Activated T-helper 1 cell treated with anti-CD3 and anti-CD28 coated beads, Interleukin-12 subunit alpha, Interleukin-12 subunit beta, Interleukin-2, Interleukin-4 antibody, amounts not matched to agents 30 ng/mL and 10 ng/mL and 1 ng/mL, durations not matched to agents 14 hours and 24 hours and 36 hours (primary cell): ENCODE measurements at regions of chr6 and their contacts with region 1.

Region 1: GRCh38 chr6:42563697-42564505 is at the start of gene UBR2:
- DNase-seq: peak; percentile 91
- H3K4me3 Mint-ChIP-seq: peak within 1 kb of the TSS; percentile 100
- H3K27ac Mint-ChIP-seq: peak within 1 kb of the TSS; percentile 97
- H3K4me1 Mint-ChIP-seq: peaks cover 31% of the 10 kb centered on the region
- H3K27me3 Mint-ChIP-seq: peaks cover 2% of the 10 kb centered on the region
- total RNA-seq, gene UBR2: 26.8 and 28.1 TPM in 2 replicates

Region 2: DNA sequence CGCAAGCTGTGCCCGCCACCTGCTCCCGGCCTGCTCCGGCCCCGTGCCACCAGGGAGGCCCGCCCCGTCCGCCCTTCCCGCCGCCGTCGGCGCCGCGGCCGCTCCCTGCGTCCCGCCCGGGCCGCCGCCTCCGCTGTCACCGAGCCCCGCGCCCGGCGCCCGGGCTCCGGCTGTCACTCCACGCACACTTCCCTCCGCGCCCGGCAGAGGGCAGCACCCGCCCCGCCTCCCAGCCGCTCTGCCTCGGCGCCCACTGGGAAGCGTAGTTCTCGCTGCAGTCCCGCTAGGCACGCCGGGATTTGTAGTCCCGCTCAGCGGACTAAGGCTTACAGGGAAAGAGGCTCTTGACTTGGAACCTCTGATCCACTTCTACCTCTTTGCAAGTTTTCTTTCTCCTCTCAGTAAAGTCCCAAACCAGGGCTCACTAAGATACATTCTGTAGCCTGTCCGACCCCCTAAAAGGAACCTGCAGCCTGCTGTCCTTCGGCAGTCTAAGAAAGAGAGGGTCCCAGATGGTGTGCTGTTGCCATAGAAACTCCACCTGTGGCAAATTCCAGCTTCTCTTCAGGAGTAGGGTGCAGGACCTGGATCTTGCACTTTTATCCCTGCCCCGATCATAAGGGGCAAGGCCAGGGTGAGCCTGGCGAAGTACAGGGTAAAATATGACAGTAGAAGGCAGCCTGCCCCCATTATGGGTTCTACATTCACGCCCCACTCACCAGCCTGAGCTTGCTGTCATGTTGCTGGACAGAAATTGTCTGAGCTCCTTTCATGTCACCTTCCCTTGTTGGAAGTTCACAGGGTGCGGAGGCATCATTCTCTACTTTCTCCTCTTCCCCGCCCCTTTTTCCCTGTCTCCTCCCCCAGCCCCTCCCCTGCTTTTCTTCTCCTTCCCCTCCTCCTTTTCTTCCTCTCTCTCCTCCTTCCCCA is 828.2 kb before region 1 on chr6 and contains the start of gene TFEB:
- intact Hi-C with region 1: loop called (anchors 1 kb)
- DNase-seq: peak; percentile 92
- H3K4me3 Mint-ChIP-seq: peak within 1 kb of the TSS; percentile 80
- H3K27ac Mint-ChIP-seq: peak within 1 kb of the TSS; percentile 31
- H3K4me1 Mint-ChIP-seq: peaks cover 23% of the 10 kb centered on the region
- H3K27me3 Mint-ChIP-seq: no peaks in the 10 kb centered on the region
- total RNA-seq, gene TFEB: 15.6 and 17.2 TPM in 2 replicates

Region 3: GRCh38 chr6:42217519-42218367 is 346.2 kb before region 1 on chr6 and contains the start of gene MRPS10:
- intact Hi-C with region 1: loop called (anchors 1 kb)
- DNase-seq: peak; percentile 89
- H3K4me3 Mint-ChIP-seq: peak within 1 kb of the TSS; percentile 96
- H3K27ac Mint-ChIP-seq: peak within 1 kb of the TSS; percentile 89
- H3K4me1 Mint-ChIP-seq: peaks cover 20% of the 10 kb centered on the region
- H3K27me3 Mint-ChIP-seq: no peaks in the 10 kb centered on the region
- total RNA-seq, gene MRPS10: 48.8 and 49.7 TPM in 2 replicates

Region 4: GRCh38 chr6:42230345-42231321 is 333.3 kb before region 1 on chr6:
- intact Hi-C with region 1: no loop called
- DNase-seq: no peak
- H3K4me3 Mint-ChIP-seq: no peak overlapping the region
- H3K27ac Mint-ChIP-seq: no peak overlapping the region
- H3K4me1 Mint-ChIP-seq: peaks cover 5% of the 10 kb centered on the region
- H3K27me3 Mint-ChIP-seq: no peaks in the 10 kb centered on the region

Region 5: DNA sequence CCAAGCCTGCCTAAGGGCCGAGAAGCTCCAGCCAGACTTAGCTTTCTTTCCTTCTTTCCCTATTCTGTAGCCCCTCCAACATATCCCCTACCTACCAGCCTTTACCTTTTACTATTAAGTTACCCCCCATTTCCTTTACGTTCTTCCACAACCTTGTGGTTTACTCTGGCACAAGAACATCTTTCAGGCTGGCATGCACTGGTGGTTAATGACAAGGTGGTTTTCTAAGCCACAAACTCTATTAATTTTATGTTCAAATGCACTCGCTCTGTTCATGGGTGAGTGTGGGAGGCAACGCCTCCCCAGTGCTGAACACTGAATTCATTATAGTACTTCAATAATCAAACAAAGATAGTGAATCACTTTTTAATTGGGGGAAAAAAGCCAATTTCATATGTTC is 176.6 kb before region 1 on chr6:
- intact Hi-C with region 1: no loop called
- DNase-seq: no peak
- H3K4me3 Mint-ChIP-seq: peak overlapping the region; percentile 45
- H3K27ac Mint-ChIP-seq: peak overlapping the region; percentile 80
- H3K4me1 Mint-ChIP-seq: peaks cover 83% of the 10 kb centered on the region
- H3K27me3 Mint-ChIP-seq: no peaks in the 10 kb centered on the region

Region 6: DNA sequence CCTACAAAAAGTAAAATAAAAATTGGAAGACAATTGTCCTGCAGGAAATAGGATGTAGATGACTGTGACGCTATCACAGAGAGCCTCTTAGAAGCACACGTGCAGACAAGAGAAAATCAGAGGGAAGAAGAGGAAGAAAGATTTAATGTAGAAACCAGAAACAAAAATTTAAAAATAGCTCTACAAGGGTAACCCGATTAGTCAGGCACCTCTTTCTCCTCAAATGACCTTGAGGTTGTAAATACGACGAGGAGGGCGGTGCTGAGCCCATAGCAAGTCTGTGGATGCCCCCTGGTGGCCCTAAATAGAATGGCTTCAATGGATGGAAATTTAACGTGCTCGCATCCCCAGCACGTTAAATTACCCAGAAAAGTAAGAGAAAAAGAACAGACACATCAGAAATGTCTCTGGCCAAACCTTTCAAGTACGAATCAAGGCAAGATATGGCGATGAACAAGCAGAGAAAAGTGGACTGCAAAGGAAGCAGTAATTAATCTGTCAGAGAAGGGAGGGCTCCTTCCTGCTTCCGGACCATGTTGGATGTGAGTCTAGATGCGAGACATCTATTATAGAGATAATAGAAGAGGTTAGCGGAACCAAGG is 162.7 kb after region 1 on chr6:
- intact Hi-C with region 1: loop called (anchors 1 kb)
- DNase-seq: peak; percentile 59
- H3K4me3 Mint-ChIP-seq: peak overlapping the region; percentile 75
- H3K27ac Mint-ChIP-seq: peak overlapping the region; percentile 98
- H3K4me1 Mint-ChIP-seq: peaks cover 19% of the 10 kb centered on the region
- H3K27me3 Mint-ChIP-seq: peaks cover 5% of the 10 kb centered on the region

Region 7: GRCh38 chr6:42879372-42880239 is 315.7 kb after region 1 on chr6 and contains the start of gene RPL7L1:
- intact Hi-C with region 1: loop called (anchors 1 kb)
- DNase-seq: peak; percentile 82
- H3K4me3 Mint-ChIP-seq: peak within 1 kb of the TSS; percentile 96
- H3K27ac Mint-ChIP-seq: peak within 1 kb of the TSS; percentile 97
- H3K4me1 Mint-ChIP-seq: peaks cover 30% of the 10 kb centered on the region
- H3K27me3 Mint-ChIP-seq: no peaks in the 10 kb centered on the region
- total RNA-seq, gene RPL7L1: 179 TPM in 2 replicates

Region 8: DNA sequence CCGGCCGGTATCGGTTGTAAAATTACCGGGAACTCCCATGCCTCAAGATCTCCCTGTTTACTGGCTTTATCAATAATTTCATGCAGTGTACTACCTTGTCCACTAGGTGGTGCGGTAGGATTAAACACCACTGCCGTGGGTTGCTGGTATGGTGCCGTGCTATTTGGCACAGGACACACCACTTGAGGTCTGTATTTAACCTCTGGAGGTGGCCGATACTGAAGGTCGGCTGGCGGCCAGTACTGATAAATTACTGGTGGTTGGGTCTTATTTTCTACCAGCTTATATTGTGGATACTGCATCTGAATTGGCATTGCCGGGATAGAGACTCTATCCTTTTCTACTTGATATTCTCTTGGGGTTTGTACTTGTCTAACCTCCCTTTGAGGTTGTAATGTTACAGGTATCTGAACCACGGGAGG is 337.6 kb after region 1 on chr6:
- intact Hi-C with region 1: no loop called
- DNase-seq: peak; percentile 72
- H3K4me3 Mint-ChIP-seq: no peak overlapping the region
- H3K27ac Mint-ChIP-seq: no peak overlapping the region
- H3K4me1 Mint-ChIP-seq: peaks cover 19% of the 10 kb centered on the region
- H3K27me3 Mint-ChIP-seq: no peaks in the 10 kb centered on the region

Region 9: GRCh38 chr6:43059168-43060033 is 495.5 kb after region 1 on chr6 and contains the starts of genes KLC4 and MRPL2:
- intact Hi-C with region 1: loop called (anchors 1 kb)
- DNase-seq: peak; percentile 96
- H3K4me3 Mint-ChIP-seq: peak within 1 kb of the TSS; percentile 96
- H3K27ac Mint-ChIP-seq: peak within 1 kb of the TSS; percentile 98
- H3K4me1 Mint-ChIP-seq: peaks cover 41% of the 10 kb centered on the region
- H3K27me3 Mint-ChIP-seq: no peaks in the 10 kb centered on the region
- total RNA-seq, gene KLC4: 12.7 and 13.7 TPM in 2 replicates
- total RNA-seq, gene MRPL2: 89.6 and 97.4 TPM in 2 replicates